Colonic mucosa (tissue), 4 donors: ENCODE measurements at regions of chr6 and their contacts with region 1.

Region 1: GRCh38 chr6:134640975-134641429 is 308.9 kb downstream of the ALDH8A1 start:
- DNase-seq: peak; percentile 76
- H3K4me3 ChIP-seq: no peak overlapping the region
- H3K27ac ChIP-seq: no peak overlapping the region
- H3K4me1 ChIP-seq: no peaks in the 10 kb centered on the region
- H3K27me3 ChIP-seq: no peaks in the 10 kb centered on the region
- CTCF ChIP-seq: peak; percentile 95

Region 2: GRCh38 chr6:133388731-133389130 is 1252.3 kb before region 1 on chr6:
- intact Hi-C with region 1: no loop called
- DNase-seq: no peak
- H3K4me3 ChIP-seq: no peak overlapping the region
- H3K27ac ChIP-seq: no peak overlapping the region
- H3K4me1 ChIP-seq: no peaks in the 10 kb centered on the region
- H3K27me3 ChIP-seq: no peaks in the 10 kb centered on the region
- CTCF ChIP-seq: no peak

Region 3: DNA sequence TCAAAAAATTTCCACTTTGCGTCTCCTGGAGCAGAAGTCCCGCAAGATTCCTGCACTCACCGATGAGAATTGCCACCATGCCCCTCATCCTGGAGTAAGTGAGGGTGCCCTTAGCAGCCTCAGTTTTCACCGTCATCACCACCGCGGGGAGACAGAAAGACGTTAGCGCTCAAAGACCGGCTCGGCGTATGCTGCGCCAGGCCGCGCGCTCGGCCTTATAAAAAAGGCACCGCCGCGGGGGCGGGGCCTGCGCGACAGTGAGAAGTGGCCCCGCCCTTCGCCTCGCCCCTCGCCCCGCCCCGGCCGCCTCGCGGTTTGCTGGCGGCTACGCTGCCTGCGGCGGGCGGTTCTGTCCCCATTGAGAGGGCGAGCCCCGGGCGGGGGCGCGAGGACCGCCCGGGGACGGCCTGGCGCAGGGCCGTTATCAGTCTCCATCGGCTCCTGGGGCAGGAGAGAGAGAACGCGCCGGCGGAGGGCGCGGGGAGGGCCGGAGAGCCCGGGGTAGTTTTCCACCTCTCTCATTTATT is 466.3 kb before region 1 on chr6:
- intact Hi-C with region 1: loop called (anchors 2 kb)
- DNase-seq: peak; percentile 96
- H3K4me3 ChIP-seq: peak overlapping the region; percentile 60
- H3K27ac ChIP-seq: peak overlapping the region; percentile 81
- H3K4me1 ChIP-seq: no peaks in the 10 kb centered on the region
- H3K27me3 ChIP-seq: no peaks in the 10 kb centered on the region
- CTCF ChIP-seq: no peak

Region 4: GRCh38 chr6:134373282-134373922 is 267.6 kb before region 1 on chr6:
- intact Hi-C with region 1: loop called (anchors 10 kb)
- DNase-seq: peak; percentile 35
- H3K4me3 ChIP-seq: no peak overlapping the region
- H3K27ac ChIP-seq: peak overlapping the region; percentile 58
- H3K4me1 ChIP-seq: peaks cover 3% of the 10 kb centered on the region
- H3K27me3 ChIP-seq: no peaks in the 10 kb centered on the region
- CTCF ChIP-seq: no peak

Region 5: DNA sequence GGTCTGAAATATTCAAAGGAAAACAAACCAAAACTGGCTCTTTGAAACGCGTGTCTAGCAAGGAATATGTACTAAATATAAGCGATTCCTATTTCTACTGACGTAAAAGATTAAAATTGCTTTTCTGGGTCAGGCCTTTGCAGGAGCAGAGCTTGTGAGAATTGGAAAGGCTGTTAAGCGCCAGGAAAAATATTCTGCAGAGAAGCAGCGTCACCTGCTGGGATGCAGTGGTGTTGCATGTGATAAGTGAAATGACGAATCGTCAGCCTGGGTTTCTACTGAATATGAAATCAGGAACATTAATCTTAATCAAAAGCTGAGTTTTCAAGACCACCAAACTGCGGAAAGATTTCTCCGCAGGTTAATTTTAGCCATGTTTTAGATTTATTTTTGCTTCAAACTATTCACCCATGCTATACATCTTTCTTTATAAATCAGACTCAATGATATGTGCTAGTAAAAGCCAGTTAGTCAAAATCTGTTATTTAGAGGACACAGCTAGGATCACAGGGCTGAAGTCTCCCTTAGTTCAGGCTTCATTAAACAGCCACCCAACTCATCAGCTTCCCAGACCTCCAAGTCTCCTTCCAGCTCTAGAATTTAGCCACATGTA is 241.5 kb after region 1 on chr6:
- intact Hi-C with region 1: loop called (anchors 10 kb)
- DNase-seq: peak; percentile 41
- H3K4me3 ChIP-seq: no peak overlapping the region
- H3K27ac ChIP-seq: no peak overlapping the region
- H3K4me1 ChIP-seq: no peaks in the 10 kb centered on the region
- H3K27me3 ChIP-seq: no peaks in the 10 kb centered on the region
- CTCF ChIP-seq: peak; percentile 97